Mammary epithelial cell (primary cell): ENCODE measurements at regions of chr14 and their contacts with region 1.

Region 1: GRCh38 chr14:94548999-94549985 is 11.9 kb upstream of the SERPINA4 start:
- DNase-seq: peak; percentile 21
- H3K4me3 ChIP-seq: no peak overlapping the region
- H3K27ac ChIP-seq: no peak overlapping the region
- H3K4me1 ChIP-seq: no peaks in the 10 kb centered on the region
- H3K27me3 ChIP-seq: no peaks in the 10 kb centered on the region
- CTCF ChIP-seq: peak; percentile 81 to 84

Region 2: DNA sequence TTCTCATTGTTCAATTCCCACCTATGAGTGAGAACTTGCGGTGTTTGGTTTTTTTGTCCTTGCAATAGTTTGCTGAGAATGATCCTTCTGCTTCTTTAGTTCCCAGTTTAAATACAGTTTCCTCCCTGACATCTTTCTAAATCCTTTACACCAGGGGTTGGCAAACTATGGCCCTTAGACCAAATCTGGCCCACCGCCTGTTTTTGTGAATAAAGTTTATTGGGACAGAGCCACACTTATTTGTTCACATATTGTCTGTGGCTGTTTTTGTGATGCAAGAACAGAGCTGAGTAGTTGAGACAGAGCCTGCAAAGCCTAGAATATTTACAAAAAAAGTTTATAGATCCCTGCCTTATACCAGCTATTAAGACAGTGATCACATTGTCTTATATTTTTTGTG is 309.9 kb before region 1 on chr14:
- CTCF ChIA-PET with region 1: no interaction called
- dilution Hi-C with region 1: no loop called
- in situ Hi-C with region 1: no loop called
- intact Hi-C with region 1: no loop called
- DNase-seq: no peak
- H3K4me3 ChIP-seq: no peak overlapping the region
- H3K27ac ChIP-seq: no peak overlapping the region
- H3K4me1 ChIP-seq: no peaks in the 10 kb centered on the region
- H3K27me3 ChIP-seq: no peaks in the 10 kb centered on the region
- CTCF ChIP-seq: no peak

Region 3: DNA sequence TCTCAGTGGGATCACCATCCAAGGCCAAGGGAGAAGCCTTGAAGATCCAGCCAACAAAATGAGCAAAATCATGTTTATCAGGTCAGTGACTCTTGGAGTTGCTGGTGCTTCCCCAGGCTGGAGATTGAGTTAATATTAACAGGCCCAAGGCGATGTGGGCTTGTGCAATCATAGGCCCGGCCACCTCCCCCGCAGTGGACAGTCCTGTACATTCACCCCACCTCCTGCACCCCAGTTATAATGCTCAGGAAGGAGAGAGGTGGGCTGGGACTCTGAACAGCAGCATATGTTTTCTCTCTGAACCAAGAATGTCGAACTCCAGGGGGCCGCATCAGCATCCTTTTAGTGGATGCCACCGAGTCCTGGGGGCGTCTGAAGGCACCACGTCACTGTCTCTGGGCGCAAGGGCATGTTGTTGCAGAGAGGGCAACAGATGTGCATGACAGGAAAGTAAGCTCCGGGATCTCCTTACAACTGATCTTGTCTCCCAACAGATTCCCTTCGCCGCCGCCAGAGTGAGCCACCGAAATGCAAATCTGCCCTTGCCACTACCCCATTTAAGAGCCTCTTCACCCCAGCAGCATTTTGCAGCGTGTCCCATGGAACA is 194.0 kb before region 1 on chr14:
- CTCF ChIA-PET with region 1: no interaction called
- dilution Hi-C with region 1: no loop called
- in situ Hi-C with region 1: no loop called
- intact Hi-C with region 1: loop called (anchors 1 kb)
- DNase-seq: peak; percentile 66
- H3K4me3 ChIP-seq: no peak overlapping the region
- H3K27ac ChIP-seq: no peak overlapping the region
- H3K4me1 ChIP-seq: peaks cover 12% of the 10 kb centered on the region
- H3K27me3 ChIP-seq: no peaks in the 10 kb centered on the region
- CTCF ChIP-seq: peak; percentile 47 to 79

Region 4: GRCh38 chr14:94428610-94429009 is 120.7 kb before region 1 on chr14:
- CTCF ChIA-PET with region 1: interaction called, 11 read pairs
- dilution Hi-C with region 1: no loop called
- in situ Hi-C with region 1: loop called in 1 of 2 experiments (anchors 10 kb)
- intact Hi-C with region 1: no loop called
- DNase-seq: no peak
- H3K4me3 ChIP-seq: no peak overlapping the region
- H3K27ac ChIP-seq: no peak overlapping the region
- H3K4me1 ChIP-seq: peaks cover 15% of the 10 kb centered on the region
- H3K27me3 ChIP-seq: no peaks in the 10 kb centered on the region
- CTCF ChIP-seq: no peak

Region 5: DNA sequence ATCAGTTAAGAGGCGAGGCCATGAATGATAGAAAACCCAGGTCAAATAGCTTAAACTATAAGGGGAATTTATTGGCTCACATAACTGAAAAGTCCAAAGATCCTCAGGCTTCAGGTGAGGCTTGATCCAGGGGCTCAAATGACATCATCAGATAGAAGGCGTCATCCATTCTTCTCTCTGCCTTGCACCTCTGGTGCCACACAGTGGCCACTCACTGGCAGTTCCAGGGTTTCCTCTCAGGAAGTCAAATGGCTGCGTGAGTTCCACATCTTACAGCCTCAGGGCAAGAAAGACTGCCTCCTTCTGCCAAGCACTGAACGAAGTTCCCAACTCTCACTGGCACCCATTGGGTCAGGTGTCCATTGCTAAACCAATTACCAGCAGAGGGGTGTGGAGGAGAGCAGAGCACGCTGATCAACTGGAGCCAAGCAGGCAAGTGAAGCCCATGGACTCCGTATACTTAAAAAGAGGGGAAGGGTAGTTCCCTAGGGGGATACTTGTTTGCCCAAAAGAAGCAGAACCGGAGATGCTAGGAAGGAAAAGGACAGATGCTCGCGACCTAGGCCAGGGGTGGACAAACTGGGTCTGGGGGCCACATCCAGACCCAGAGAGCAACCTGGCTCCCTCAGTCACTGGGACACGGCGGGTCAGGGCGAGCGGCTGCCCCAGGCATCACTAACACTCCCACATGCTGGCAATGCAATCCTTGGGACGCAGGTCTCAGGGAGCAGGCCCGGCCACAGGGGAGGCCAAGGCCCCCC is 132.2 kb after region 1 on chr14:
- CTCF ChIA-PET with region 1: no interaction called
- dilution Hi-C with region 1: no loop called
- in situ Hi-C with region 1: no loop called
- intact Hi-C with region 1: loop called (anchors 2 kb)
- DNase-seq: peak; percentile 64
- H3K4me3 ChIP-seq: no peak overlapping the region
- H3K27ac ChIP-seq: no peak overlapping the region
- H3K4me1 ChIP-seq: peaks cover 10% of the 10 kb centered on the region
- H3K27me3 ChIP-seq: no peaks in the 10 kb centered on the region
- CTCF ChIP-seq: peak; percentile 79 to 91

Region 6: DNA sequence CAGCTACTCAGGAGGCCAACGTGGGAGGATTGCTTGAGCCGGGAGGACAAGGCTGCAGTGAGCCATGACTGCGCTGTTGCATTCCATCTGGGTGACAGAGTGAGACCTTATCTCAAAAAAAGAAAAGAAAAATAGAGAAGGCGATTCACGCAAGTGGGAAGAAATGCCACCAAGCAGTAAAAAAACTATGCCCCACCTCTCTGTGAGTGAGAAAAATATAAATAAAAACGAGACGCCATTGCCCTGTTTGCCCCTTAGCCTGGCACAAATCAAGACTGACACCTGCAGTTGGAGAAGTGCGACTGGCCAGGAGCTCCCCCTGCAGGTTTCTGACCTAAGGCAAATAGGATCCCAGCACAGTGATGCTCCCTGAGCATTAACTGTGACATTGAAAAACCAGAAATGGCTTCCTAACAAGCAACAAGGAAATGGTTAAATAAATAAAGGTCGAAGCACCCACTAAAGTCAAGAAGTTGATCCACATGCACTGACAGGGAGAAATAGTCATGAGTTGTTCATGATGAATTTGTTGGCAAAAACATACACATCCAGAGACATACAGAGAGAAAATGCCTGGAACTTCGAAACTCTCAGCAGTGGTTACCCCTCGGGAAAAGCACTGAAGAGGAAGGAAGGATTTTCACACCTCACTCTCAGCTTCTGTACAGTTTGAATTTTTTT is 199.5 kb after region 1 on chr14:
- CTCF ChIA-PET with region 1: no interaction called
- dilution Hi-C with region 1: no loop called
- in situ Hi-C with region 1: no loop called
- intact Hi-C with region 1: no loop called
- DNase-seq: no peak
- H3K4me3 ChIP-seq: no peak overlapping the region
- H3K27ac ChIP-seq: no peak overlapping the region
- H3K4me1 ChIP-seq: no peaks in the 10 kb centered on the region
- H3K27me3 ChIP-seq: no peaks in the 10 kb centered on the region
- CTCF ChIP-seq: peak; percentile 35 to 78